ENCODE measurements at regions of chr15 and their contacts with region 1.

Region 1: DNA sequence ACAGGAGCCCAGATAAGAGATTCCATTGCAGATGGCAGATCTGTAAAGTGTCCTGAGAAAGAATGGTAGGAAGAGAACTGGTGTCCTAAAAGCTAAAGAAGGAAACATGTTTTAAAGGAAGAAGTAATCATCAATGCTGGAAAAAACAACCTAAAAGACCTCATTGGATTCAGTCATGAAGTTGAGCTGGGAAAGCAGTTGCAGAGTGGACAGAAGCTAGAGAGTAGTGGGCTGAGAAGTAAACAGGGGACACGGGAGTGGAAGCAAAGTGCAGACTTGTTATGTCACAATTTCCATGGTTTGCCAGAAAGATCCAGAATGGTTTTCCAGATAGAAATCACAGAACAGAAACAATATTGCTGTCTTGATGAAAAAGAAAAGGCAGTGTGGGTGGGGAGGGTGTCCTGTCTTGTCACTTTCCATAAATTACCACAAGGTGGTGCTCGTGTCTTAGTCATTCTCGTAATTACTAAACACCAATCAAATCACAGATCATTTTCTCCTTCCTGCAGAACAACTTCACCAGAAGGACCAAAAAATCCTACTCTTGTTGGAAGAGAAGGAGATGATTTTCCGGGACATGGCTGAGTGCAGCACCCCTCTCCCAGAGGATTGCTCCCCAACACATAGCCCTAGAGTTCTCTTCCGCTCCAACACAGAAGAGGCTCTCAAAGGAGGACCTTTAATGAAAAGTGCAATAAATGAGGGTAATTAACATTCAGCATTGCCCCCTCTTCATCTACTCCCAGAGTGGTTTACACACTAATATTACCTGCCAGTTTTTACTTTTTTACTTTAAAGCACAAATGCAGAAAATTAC is 64.5 kb downstream of the KLHL25 start:
- ATAC-seq: peak; percentile 56 to 95 (median 70)
- H3K4me3 ChIP-seq: no peak overlapping the region
- H3K27ac ChIP-seq: no peak overlapping the region
- H3K4me1 ChIP-seq: no peaks in the 10 kb centered on the region

Region 2: GRCh38 chr15:85831415-85832113 is 101.4 kb after region 1 on chr15:
- in situ Hi-C with region 1: loop called in 8 of 9 experiments (anchors 10 to 25 kb)
- ATAC-seq: peak; percentile 76 to 99 (median 89)
- H3K4me3 ChIP-seq: no peak overlapping the region
- H3K27ac ChIP-seq: no peak overlapping the region
- H3K4me1 ChIP-seq: peaks cover 3 to 10% of the 10 kb centered on the region in 2 donors

Region 3: DNA sequence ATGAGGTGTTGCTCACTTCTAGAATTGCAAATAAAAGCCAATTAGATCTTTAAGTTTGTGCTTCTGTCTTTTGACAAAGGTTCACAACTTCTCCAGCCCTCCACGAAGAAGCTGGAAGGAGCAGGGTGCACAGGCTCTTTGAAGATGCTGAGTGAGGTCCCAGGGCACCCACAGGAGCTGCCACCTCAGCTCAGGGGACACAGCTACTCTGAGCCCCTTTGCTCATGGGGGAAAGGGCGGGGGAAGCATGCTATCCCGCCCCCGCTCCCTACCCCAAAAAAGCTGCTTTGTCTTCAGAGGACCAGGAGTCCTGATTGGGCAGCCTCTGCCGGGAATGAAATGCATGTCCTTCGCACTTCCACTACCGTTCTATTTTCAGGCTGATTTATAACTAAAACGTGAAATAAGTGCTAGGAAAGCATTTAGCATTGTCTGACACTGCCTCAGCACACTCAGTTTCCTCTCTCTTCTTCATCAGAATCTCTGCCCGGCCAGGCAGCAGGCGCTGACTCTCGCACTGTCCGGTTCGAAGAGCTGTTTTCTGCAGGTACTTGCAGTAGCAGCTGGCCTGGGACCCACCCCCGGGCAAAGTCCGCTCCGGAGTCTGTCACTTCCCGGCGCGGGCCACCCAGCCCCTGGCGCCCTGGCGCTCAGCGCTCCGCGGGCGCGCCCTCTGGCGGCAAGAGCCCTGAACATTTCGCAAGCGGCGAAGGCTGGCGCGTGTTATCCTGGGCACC is 110.0 kb after region 1 on chr15:
- in situ Hi-C with region 1: loop called in 8 of 9 experiments (anchors 10 to 25 kb)
- ATAC-seq: peak; percentile 84 to 99 (median 98)
- H3K4me3 ChIP-seq: peak overlapping the region; percentile 3 to 30 (median 17)
- H3K27ac ChIP-seq: no peak overlapping the region
- H3K4me1 ChIP-seq: peaks cover 0 to 4% of the 10 kb centered on the region in 2 donors